Endothelial cell of umbilical vein (primary cell): ENCODE measurements at regions of chr19 and their contacts with region 1.

Region 1: DNA sequence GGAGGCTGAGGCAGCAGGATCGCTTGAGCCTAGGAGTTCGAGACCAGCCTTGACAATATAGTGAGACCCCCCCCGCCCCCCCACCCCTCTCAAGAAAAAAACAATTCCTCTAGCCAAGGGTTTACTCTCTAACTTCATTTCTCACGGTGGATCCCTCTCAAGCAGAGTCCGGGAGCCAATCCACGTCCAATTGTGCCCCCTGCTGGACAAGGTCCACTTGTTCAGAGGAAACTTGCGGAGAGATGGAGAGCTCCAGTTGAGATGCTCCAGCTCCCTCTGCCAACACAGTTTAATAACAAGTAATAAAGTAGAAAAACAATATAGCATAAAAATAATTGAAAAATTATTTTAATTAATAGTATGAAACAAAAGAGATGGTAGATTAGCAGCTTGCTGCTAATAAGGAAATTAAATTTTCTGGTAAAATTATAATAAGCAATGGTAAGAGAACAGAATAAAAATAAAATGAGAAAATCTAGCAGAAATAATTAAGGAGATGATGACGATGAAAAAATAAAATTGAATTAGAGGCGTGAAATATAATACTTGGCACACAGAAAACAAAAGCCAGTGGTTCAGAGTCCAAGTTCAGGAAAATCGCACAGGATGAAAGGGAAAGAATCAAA is 14.5 kb upstream of the SIGLEC14 start:
- DNase-seq: peak; percentile 69
- H3K4me3 ChIP-seq: no peak overlapping the region
- H3K27ac ChIP-seq: no peak overlapping the region
- H3K4me1 ChIP-seq: peaks cover 2% of the 10 kb centered on the region
- H3K27me3 ChIP-seq: peaks cover 0 to 2% of the 10 kb centered on the region in 2 experiments
- CTCF ChIP-seq: peak; percentile 65 to 68
- POLR2A ChIP-seq: no peak

Region 2: GRCh38 chr19:51422053-51422448 is 239.0 kb before region 1 on chr19:
- CTCF ChIA-PET with region 1: interaction called, 138 read pairs
- POLR2A ChIA-PET with region 1: no interaction called
- dilution Hi-C with region 1: no loop called
- intact Hi-C with region 1: loop called (anchors 1 kb)
- DNase-seq: peak; percentile 67
- H3K4me3 ChIP-seq: no peak overlapping the region
- H3K27ac ChIP-seq: no peak overlapping the region
- H3K4me1 ChIP-seq: no peaks in the 10 kb centered on the region
- H3K27me3 ChIP-seq: no peaks in the 10 kb centered on the region
- CTCF ChIP-seq: peak; percentile 99
- POLR2A ChIP-seq: no peak

Region 3: GRCh38 chr19:51480590-51480989 is 180.5 kb before region 1 on chr19:
- CTCF ChIA-PET with region 1: interaction called, 414 read pairs
- POLR2A ChIA-PET with region 1: no interaction called
- dilution Hi-C with region 1: no loop called
- intact Hi-C with region 1: no loop called
- DNase-seq: no peak
- H3K4me3 ChIP-seq: no peak overlapping the region
- H3K27ac ChIP-seq: no peak overlapping the region
- H3K4me1 ChIP-seq: no peaks in the 10 kb centered on the region
- H3K27me3 ChIP-seq: no peaks in the 10 kb centered on the region
- CTCF ChIP-seq: no peak
- POLR2A ChIP-seq: no peak

Region 4: DNA sequence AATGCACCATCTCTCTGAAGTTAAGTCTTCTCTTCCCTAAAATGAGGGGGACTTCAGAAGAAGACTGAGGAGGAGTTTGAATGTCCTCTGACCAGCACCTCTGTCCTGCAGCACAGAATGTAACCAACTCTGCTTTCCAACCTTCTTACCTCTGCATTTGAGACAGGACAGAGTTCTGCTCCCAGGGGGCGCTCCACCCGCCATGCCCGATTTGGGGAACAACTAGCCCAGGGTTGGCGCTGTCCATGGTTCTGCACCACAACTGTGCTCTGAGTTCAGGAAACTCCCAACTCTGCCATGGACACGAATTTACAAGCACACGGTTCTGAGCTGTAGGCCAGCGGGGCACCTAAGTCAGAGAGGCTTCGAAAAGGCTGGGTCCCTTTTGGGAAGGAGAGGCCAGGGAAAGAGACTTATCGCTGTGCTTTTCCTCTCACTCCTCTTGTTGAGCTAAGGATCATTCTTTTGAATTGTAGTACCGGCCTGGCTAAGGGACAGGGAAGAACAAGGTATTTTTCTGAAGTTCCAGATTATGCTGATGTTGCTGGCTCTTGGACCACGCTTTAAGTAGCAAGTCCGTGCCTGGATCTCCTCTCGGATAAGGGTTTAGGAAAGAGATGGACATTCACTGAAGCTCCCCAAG is 53.0 kb before region 1 on chr19:
- CTCF ChIA-PET with region 1: interaction called, 20 read pairs
- POLR2A ChIA-PET with region 1: no interaction called
- dilution Hi-C with region 1: no loop called
- intact Hi-C with region 1: loop called (anchors 5 kb)
- DNase-seq: peak; percentile 60
- H3K4me3 ChIP-seq: no peak overlapping the region
- H3K27ac ChIP-seq: no peak overlapping the region
- H3K4me1 ChIP-seq: no peaks in the 10 kb centered on the region
- H3K27me3 ChIP-seq: peaks cover 0 to 1% of the 10 kb centered on the region in 2 experiments
- CTCF ChIP-seq: peak; percentile 82
- POLR2A ChIP-seq: no peak

Region 5: GRCh38 chr19:51644636-51645271 is 16.3 kb before region 1 on chr19:
- CTCF ChIA-PET with region 1: interaction called, 22 read pairs
- POLR2A ChIA-PET with region 1: no interaction called
- dilution Hi-C with region 1: no loop called
- intact Hi-C with region 1: no loop called
- DNase-seq: no peak
- H3K4me3 ChIP-seq: no peak overlapping the region
- H3K27ac ChIP-seq: no peak overlapping the region
- H3K4me1 ChIP-seq: no peaks in the 10 kb centered on the region
- H3K27me3 ChIP-seq: peaks cover 0 to 3% of the 10 kb centered on the region in 2 experiments
- CTCF ChIP-seq: no peak
- POLR2A ChIP-seq: no peak

Region 6: DNA sequence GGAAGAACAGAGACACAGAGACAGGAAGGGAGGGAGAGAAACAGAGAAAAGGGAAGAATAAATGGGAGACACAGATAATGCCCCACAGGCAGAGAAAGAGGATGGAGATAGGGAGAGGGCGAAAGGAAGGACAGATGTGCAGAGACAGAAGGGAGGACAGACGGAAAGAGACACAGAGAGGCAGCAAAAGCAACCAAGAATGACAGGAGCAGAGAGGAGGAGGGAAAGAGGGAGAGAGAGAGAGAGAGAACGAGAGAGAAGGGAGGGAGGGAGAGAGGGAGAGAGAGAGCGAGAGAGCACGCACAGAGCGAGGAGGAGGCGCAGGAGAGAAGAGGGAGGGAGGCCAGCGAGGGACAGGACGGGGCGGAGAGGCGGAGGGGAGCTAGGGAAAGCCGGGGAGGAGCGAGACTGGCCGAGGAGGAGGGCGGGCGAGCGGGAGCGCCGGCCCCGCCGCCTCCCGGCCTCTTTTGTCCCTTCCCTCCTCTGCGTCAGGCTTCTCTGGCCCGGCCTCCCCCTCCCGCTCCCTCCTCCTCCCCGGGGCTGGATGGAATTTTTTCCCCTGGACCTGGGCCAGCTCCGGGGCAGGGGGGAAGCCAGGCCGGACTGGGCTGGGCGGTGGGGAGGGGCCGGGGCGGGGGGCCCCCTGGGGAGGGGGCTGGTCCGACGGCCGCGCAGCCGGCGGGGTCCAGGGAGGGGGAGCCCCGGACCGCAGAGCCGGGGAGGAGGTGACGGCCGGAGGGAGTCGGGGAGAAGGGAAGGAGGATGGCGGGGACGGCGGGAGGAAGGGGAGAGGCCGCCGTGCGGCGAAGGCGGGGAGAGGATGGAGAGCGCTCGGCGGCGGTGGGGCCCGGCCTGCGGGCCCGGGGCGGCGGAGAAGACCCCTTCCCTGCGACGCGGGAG is 27.8 kb after region 1 on chr19:
- CTCF ChIA-PET with region 1: interaction called, 27 read pairs
- POLR2A ChIA-PET with region 1: no interaction called
- dilution Hi-C with region 1: no loop called
- intact Hi-C with region 1: no loop called
- DNase-seq: peak; percentile 92
- H3K4me3 ChIP-seq: peak overlapping the region; percentile 73 to 94 (median 91)
- H3K27ac ChIP-seq: peak overlapping the region; percentile 59
- H3K4me1 ChIP-seq: peaks cover 24% of the 10 kb centered on the region
- H3K27me3 ChIP-seq: no peaks in the 10 kb centered on the region
- CTCF ChIP-seq: peak in 1 of 2 donors; percentile 3
- POLR2A ChIP-seq: no peak